ENCODE measurements at regions of chr5 and their contacts with region 1.

Region 1: DNA sequence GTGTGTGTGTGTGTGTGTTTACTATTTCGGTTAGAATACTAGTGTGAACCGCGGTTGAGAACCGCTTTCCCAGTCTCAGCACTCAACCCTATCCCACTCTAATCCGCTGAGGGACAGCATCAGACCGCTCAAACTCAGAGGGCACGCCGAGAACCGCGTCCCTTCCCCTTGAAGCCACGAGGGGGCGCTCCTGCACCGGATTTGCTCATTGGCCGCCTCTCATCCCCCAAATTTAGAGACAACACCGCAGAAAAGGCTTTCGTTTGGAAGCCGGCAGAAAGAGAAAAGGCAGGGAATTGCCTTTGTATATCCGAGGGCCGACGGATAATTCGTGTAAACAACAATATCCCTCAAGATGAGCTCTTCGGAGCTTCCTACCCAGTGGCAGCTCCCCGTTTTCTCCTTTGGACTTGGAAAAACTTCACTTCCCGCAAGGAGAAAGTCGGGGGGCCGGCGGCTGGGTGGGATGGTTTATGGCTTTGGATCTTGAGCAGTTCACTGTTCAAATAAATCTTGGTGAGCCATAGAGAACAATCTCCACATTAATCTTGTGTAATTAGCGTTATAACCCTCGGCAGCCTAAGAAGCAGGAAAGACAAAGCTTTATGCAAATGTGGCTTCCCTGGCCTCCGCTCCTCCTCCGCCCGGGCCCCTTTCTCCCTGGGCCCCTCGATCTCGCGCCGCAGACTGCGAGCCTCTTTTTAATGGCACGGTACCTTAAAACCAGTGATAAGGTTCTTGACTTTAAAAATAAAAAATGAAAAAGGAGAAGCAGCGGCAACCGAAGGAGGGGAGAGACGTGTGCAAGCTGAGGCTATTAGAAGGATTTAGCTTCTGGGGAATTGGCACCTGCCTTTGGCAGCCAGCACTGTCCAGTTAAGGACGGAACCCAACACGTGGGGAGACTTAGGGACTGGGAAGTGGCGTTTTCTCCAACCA is 296.8 kb downstream of the PARP8 start:
- DNase-seq: peak; percentile 83
- ATAC-seq: peak; percentile 88
- H3K4me3 Mint-ChIP-seq: peak overlapping the region; percentile 71
- H3K27ac Mint-ChIP-seq: no peak overlapping the region
- H3K4me1 Mint-ChIP-seq: peaks cover 35% of the 10 kb centered on the region
- H3K27me3 Mint-ChIP-seq: peaks cover 55% of the 10 kb centered on the region

Region 2: GRCh38 chr5:50623666-50624065 is 339.5 kb before region 1 on chr5:
- CTCF ChIA-PET with region 1: no interaction called
- POLR2A ChIA-PET with region 1: no interaction called
- intact Hi-C with region 1: no loop called
- DNase-seq: no peak
- ATAC-seq: no peak
- H3K4me3 Mint-ChIP-seq: no peak overlapping the region
- H3K27ac Mint-ChIP-seq: no peak overlapping the region
- H3K4me1 Mint-ChIP-seq: peaks cover 2% of the 10 kb centered on the region
- H3K27me3 Mint-ChIP-seq: no peaks in the 10 kb centered on the region

Region 3: GRCh38 chr5:51382763-51383490 is 419.7 kb after region 1 on chr5 and contains the start of gene ISL1:
- CTCF ChIA-PET with region 1: no interaction called
- POLR2A ChIA-PET with region 1: no interaction called
- intact Hi-C with region 1: loop called (anchors 2 kb)
- DNase-seq: peak; percentile 42
- ATAC-seq: peak; percentile 44
- H3K4me3 Mint-ChIP-seq: peak within 1 kb of the TSS; percentile 26
- H3K27ac Mint-ChIP-seq: no peak within 1 kb of the TSS
- H3K4me1 Mint-ChIP-seq: peaks cover 5% of the 10 kb centered on the region
- H3K27me3 Mint-ChIP-seq: peaks cover 85% of the 10 kb centered on the region
- total RNA-seq, gene ISL1: not detected

Region 4: DNA sequence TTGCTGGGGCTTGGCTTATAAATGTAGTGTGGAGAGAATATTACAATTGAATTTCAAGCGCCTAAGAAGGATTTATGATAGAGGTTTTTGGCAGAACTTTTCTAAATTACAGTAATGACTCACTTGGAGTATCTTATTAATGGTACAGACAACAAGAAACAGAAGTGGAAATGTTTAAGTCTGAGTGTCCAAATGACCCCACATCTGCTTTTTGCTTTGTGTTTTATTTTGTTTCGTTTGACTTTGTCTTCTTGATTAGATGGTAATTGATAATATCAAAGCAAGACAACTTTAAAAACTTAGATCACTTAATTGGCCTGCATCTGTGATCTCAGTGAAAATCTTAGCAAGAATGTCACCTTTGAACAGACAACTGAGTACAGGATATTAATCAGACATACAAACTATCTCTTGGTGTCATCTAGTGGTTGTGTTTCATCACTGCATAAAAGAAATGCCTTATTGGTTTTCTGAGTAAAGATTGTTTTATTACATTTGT is 997.5 kb after region 1 on chr5:
- CTCF ChIA-PET with region 1: interaction called, 3 read pairs
- POLR2A ChIA-PET with region 1: no interaction called
- intact Hi-C with region 1: loop called in 1 of 2 experiments (anchors 5 kb)
- DNase-seq: no peak
- ATAC-seq: no peak
- H3K4me3 Mint-ChIP-seq: no peak overlapping the region
- H3K27ac Mint-ChIP-seq: no peak overlapping the region
- H3K4me1 Mint-ChIP-seq: no peaks in the 10 kb centered on the region
- H3K27me3 Mint-ChIP-seq: no peaks in the 10 kb centered on the region

Region 5: GRCh38 chr5:52007230-52007858 is 1044.1 kb after region 1 on chr5:
- CTCF ChIA-PET with region 1: interaction called, 6 read pairs
- POLR2A ChIA-PET with region 1: no interaction called
- intact Hi-C with region 1: loop called (anchors 1 to 10 kb)
- DNase-seq: no peak
- ATAC-seq: no peak
- H3K4me3 Mint-ChIP-seq: no peak overlapping the region
- H3K27ac Mint-ChIP-seq: no peak overlapping the region
- H3K4me1 Mint-ChIP-seq: no peaks in the 10 kb centered on the region
- H3K27me3 Mint-ChIP-seq: no peaks in the 10 kb centered on the region

Region 6: DNA sequence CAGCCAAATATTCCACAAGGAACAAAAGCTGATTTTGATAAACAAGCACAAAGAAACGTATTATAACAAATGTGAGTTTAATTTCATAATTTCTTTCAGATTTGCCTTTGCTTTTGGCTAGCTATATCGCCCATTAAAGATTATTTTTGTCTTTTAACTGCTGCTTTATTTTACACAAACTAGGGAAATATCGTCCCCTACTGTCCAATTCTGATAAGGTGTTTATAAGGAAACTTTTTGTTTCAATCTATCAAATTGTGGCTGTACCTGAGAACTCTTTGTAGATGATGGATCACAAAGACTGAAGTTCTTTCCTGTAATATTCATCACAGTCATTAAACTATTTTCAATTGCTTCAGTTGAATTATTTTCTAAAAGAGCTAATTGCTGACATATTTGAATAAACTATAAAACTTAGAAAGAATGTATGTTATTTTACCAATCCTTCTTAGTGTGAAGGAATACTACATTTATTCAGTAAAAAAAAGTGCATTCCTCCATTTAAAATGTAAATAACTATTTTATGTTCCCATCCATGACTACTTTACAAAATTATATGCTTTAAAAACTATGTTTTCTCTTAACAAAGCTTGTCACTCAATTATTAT is 1393.2 kb after region 1 on chr5:
- CTCF ChIA-PET with region 1: no interaction called
- POLR2A ChIA-PET with region 1: no interaction called
- intact Hi-C with region 1: loop called (anchors 2 to 10 kb)
- DNase-seq: no peak
- ATAC-seq: no peak
- H3K4me3 Mint-ChIP-seq: no peak overlapping the region
- H3K27ac Mint-ChIP-seq: no peak overlapping the region
- H3K4me1 Mint-ChIP-seq: no peaks in the 10 kb centered on the region
- H3K27me3 Mint-ChIP-seq: no peaks in the 10 kb centered on the region

Region 7: DNA sequence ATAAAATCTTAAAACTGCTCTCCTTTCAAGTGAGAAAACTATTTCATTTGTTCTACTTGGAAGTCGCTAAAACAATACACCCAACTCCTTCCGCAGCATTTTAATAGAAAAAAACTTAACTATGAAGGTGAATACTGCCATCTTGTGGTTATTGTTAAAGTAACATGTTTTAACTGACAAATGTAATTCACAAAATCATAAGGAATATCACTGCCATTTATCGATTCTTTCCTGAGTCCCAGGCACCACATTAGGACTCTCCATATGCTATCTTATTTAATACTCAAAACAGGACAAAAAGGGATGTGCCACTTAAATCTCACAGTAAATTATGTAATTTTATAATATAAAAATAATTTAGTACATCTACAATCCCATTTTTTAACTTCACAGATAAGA is 1694.0 kb after region 1 on chr5:
- CTCF ChIA-PET with region 1: interaction called, 6 read pairs
- POLR2A ChIA-PET with region 1: no interaction called
- intact Hi-C with region 1: loop called (anchors 1 to 2 kb)
- DNase-seq: no peak
- ATAC-seq: no peak
- H3K4me3 Mint-ChIP-seq: no peak overlapping the region
- H3K27ac Mint-ChIP-seq: no peak overlapping the region
- H3K4me1 Mint-ChIP-seq: no peaks in the 10 kb centered on the region
- H3K27me3 Mint-ChIP-seq: peaks cover 8% of the 10 kb centered on the region

Region 8: GRCh38 chr5:52915176-52915875 is 1952.1 kb after region 1 on chr5:
- CTCF ChIA-PET with region 1: no interaction called
- POLR2A ChIA-PET with region 1: no interaction called
- intact Hi-C with region 1: loop called in 1 of 2 experiments (anchors 5 kb)
- DNase-seq: peak; percentile 59
- ATAC-seq: peak; percentile 88
- H3K4me3 Mint-ChIP-seq: no peak overlapping the region
- H3K27ac Mint-ChIP-seq: no peak overlapping the region
- H3K4me1 Mint-ChIP-seq: peaks cover 7% of the 10 kb centered on the region
- H3K27me3 Mint-ChIP-seq: peaks cover 3% of the 10 kb centered on the region